ENCODE measurements at regions of chr3 and their contacts with region 1.

Region 1: GRCh38 chr3:197186887-197187588 is 111.4 kb downstream of the DLG1 start:
- DNase-seq: no peak
- H3K4me3 ChIP-seq: no peak overlapping the region
- H3K27ac ChIP-seq: no peak overlapping the region
- H3K4me1 ChIP-seq: no peaks in the 10 kb centered on the region
- H3K27me3 ChIP-seq: no peaks in the 10 kb centered on the region
- CTCF ChIP-seq: peak; percentile 61 to 82 (median 72)
- EP300 ChIP-seq: no peak
- POLR2A ChIP-seq: no peak

Region 2: DNA sequence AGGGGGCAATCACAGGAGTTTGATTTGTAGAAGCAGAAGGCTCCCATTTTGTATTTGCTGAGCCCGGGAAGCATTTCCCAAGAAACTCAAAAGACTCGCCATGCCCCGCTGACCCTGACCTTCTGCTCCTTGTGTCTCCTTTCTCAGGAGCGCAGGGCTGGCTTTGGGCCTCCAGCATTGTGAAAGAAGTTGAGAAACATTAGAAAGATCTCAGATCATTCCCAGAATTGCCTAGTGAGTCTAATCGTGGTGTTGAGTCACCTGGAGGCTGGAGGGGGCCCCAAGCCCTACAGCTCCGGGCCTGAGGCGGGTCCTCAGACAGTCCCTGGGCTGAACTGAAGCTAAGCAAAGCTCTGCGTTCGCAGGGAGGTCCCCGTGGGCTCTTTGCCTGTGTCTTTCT is 207.5 kb before region 1 on chr3:
- intact Hi-C with region 1: loop called (anchors 2 kb)
- DNase-seq: no peak
- H3K4me3 ChIP-seq: no peak overlapping the region
- H3K27ac ChIP-seq: no peak overlapping the region
- H3K4me1 ChIP-seq: peaks cover 0 to 8% (median 4%) of the 10 kb centered on the region in 4 donors
- H3K27me3 ChIP-seq: peaks cover 0 to 8% (median 0%) of the 10 kb centered on the region in 4 donors
- CTCF ChIP-seq: no peak
- EP300 ChIP-seq: no peak
- POLR2A ChIP-seq: no peak

Region 3: GRCh38 chr3:197002701-197003454 is 184.2 kb before region 1 on chr3:
- intact Hi-C with region 1: loop called (anchors 10 kb)
- DNase-seq: no peak
- H3K4me3 ChIP-seq: peak overlapping the region; percentile 62 to 82 (median 74)
- H3K27ac ChIP-seq: peak overlapping the region; percentile 80 to 86 (median 83)
- H3K4me1 ChIP-seq: peaks cover 5 to 21% (median 19%) of the 10 kb centered on the region in 4 donors
- H3K27me3 ChIP-seq: no peaks in the 10 kb centered on the region
- CTCF ChIP-seq: peak; percentile 70 to 84 (median 83)
- EP300 ChIP-seq: no peak
- POLR2A ChIP-seq: no peak

Region 4: DNA sequence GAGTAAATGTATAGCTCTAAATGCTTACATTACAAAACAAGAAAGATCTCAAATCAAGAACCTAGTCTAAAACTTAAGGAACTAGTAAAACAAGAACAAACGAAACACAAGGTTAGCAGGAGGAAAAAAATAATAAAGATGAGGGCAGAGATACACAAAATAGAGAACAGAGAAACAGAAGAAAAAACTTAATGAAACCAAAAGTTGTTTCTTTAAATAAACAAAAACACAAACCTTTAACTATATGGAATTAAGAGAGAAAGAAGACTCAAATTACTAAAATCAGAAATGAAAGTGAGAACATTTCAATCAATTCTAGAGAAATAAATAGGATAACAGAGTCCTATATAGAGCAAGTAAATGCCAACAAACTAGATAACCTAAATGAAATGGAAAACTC is 51.8 kb after region 1 on chr3:
- intact Hi-C with region 1: no loop called
- DNase-seq: no peak
- H3K4me3 ChIP-seq: no peak overlapping the region
- H3K27ac ChIP-seq: no peak overlapping the region
- H3K4me1 ChIP-seq: no peaks in the 10 kb centered on the region
- H3K27me3 ChIP-seq: no peaks in the 10 kb centered on the region
- CTCF ChIP-seq: no peak
- EP300 ChIP-seq: no peak
- POLR2A ChIP-seq: no peak

Measured in esophagus muscularis mucosa (tissue), 4 donors.